ENCODE measurements at regions of chr16 and their contacts with region 1.

Region 1: GRCh38 chr16:81493755-81494433 is 49.3 kb downstream of the CMIP start:
- DNase-seq: no peak
- ATAC-seq: peak; percentile 21 to 81 (median 60)
- H3K4me3 ChIP-seq: no peak overlapping the region
- H3K27ac ChIP-seq: peak overlapping the region; percentile 15 to 84 (median 72)
- H3K4me1 ChIP-seq: peaks cover 11 to 97% (median 90%) of the 10 kb centered on the region in 9 donors
- H3K27me3 ChIP-seq: no peaks in the 10 kb centered on the region
- CTCF ChIP-seq: no peak

Region 2: GRCh38 chr16:81451753-81452680 is 41.9 kb before region 1 on chr16:
- intact Hi-C with region 1: loop called in 5 of 10 experiments (anchors 5 to 10 kb)
- DNase-seq: peak in 1 of 2 donors; percentile 51
- ATAC-seq: peak in 7 of 8 donors; percentile 59 to 79 (median 65)
- H3K4me3 ChIP-seq: peak overlapping the region in 1 of 10 donors; percentile 12
- H3K27ac ChIP-seq: peak overlapping the region in 8 of 10 donors; percentile 10 to 88 (median 40)
- H3K4me1 ChIP-seq: peaks cover 7 to 98% (median 49%) of the 10 kb centered on the region in 9 donors
- H3K27me3 ChIP-seq: no peaks in the 10 kb centered on the region
- CTCF ChIP-seq: no peak

Measured in heart right ventricle (tissue), 16 donors.